ENCODE measurements at regions of chr12 and their contacts with region 1.

Region 1: DNA sequence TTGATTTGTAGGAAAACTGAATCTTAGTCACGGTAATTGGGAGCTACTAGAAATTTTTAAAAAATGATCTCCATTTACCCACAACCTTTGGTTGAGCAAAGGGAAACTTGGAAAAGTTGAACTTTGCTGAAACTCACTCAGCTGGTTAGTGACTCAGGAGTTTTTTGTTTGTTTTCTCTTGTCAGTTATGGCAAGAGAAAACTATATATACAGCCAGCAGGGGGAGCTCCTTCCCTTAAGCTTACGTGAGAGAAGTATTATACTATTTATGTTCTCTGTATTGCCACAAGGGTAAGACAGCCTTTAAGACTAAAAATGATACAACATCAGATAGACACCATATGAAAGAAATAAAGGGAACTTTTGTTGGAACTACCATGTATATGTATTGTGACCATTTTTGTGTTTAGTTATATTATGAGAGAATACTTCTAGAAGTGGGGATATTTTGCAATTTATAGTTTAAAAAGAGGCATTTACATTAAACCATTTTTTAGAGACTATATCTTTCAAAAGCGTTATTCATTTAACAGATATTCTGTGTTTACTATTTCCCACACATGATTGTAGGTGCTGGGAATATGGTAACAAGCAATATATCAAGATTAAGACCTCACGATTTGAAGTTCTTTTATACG is 28.1 kb upstream of the TBC1D30 start:
- DNase-seq: peak; percentile 76 to 85
- H3K4me3 ChIP-seq: no peak overlapping the region
- H3K4me3 Mint-ChIP-seq: no peak overlapping the region
- H3K27ac Mint-ChIP-seq: no peak overlapping the region
- H3K4me1 ChIP-seq: peaks cover 39% of the 10 kb centered on the region
- H3K4me1 Mint-ChIP-seq: peaks cover 45% of the 10 kb centered on the region
- H3K27me3 ChIP-seq: no peaks in the 10 kb centered on the region
- H3K27me3 Mint-ChIP-seq: no peaks in the 10 kb centered on the region
- CTCF ChIP-seq: peak; percentile 62 to 76

Region 2: DNA sequence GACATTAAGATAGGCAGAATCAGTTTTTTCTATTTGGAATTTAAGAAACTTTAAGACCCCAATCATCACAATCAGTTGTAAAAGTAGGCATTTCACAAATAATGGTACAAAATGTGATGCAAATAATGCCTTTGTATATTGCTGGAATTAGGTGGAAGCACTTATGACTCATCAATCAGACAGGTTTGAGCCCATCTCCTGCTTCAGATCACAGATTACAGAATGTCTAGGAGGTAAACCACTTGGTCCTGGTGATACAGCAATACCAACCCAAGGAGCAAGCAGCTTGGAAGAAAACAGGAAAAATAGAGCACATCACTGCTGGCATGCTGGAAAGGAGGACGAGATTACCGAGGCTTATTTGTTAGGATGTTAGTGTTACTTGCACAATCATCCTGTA is 463.4 kb before region 1 on chr12:
- CTCF ChIA-PET with region 1: no interaction called
- POLR2A ChIA-PET with region 1: no interaction called
- intact Hi-C with region 1: no loop called
- DNase-seq: no peak
- H3K4me3 ChIP-seq: no peak overlapping the region
- H3K4me3 Mint-ChIP-seq: no peak overlapping the region
- H3K27ac Mint-ChIP-seq: no peak overlapping the region
- H3K4me1 ChIP-seq: no peaks in the 10 kb centered on the region
- H3K4me1 Mint-ChIP-seq: no peaks in the 10 kb centered on the region
- H3K27me3 ChIP-seq: no peaks in the 10 kb centered on the region
- H3K27me3 Mint-ChIP-seq: no peaks in the 10 kb centered on the region
- CTCF ChIP-seq: no peak

Region 3: DNA sequence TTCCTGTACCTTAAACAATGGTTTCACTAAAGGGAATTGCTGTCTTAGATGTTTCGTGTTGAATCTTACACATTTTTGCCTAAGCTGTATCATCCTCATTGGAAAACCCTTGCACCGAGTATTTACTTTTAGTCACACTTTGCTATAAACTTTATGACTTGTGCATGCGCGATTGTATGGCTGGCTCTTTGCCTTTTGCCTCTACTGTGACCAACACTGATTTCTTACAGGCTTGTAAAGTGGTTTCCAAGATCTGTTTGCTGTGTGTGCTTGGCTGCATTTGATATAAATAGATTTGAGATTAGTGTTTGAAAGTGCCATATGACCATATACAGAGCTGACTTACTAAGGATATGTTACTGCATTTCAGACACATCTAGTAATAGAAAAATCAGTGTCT is 145.6 kb before region 1 on chr12:
- CTCF ChIA-PET with region 1: no interaction called
- POLR2A ChIA-PET with region 1: no interaction called
- intact Hi-C with region 1: no loop called
- DNase-seq: no peak
- H3K4me3 ChIP-seq: no peak overlapping the region
- H3K4me3 Mint-ChIP-seq: no peak overlapping the region
- H3K27ac Mint-ChIP-seq: no peak overlapping the region
- H3K4me1 ChIP-seq: peaks cover 31% of the 10 kb centered on the region
- H3K4me1 Mint-ChIP-seq: peaks cover 11% of the 10 kb centered on the region
- H3K27me3 ChIP-seq: no peaks in the 10 kb centered on the region
- H3K27me3 Mint-ChIP-seq: no peaks in the 10 kb centered on the region
- CTCF ChIP-seq: no peak

Region 4: DNA sequence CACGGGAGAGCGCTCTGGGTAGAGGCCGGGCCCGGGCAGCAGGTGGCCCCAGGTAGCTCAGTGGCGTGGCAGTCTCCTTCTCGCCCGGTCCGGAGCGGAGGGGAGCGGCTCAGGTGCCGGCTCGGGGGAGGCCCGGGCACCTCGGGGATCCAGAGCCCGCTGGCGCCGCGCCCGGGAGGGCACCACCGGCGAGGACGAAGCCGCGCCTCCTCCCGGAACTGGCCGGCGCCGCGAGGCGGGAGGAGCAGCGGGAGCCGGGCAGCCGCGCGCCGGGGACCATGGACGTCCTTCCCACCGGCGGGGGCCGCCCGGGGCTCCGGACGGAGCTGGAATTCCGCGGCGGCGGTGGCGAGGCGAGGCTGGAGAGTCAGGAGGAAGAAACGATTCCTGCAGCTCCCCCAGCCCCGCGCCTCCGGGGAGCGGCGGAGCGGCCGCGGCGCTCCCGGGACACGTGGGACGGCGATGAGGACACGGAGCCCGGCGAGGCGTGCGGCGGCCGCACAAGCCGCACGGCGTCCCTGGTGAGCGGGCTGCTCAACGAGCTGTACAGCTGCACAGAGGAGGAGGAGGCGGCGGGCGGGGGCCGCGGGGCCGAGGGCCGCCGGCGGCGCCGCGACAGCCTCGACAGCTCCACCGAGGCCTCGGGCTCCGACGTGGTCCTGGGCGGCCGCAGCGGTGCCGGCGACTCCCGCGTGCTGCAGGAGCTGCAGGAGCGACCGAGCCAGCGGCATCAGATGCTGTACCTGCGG is 15.6 kb before region 1 on chr12:
- CTCF ChIA-PET with region 1: interaction called, 19 read pairs
- POLR2A ChIA-PET with region 1: interaction called, 8 read pairs
- intact Hi-C with region 1: no loop called
- DNase-seq: peak; percentile 64 to 75
- H3K4me3 ChIP-seq: peak overlapping the region; percentile 49
- H3K4me3 Mint-ChIP-seq: peak overlapping the region; percentile 90
- H3K27ac Mint-ChIP-seq: peak overlapping the region; percentile 80
- H3K4me1 ChIP-seq: peaks cover 19% of the 10 kb centered on the region
- H3K4me1 Mint-ChIP-seq: peaks cover 7% of the 10 kb centered on the region
- H3K27me3 ChIP-seq: no peaks in the 10 kb centered on the region
- H3K27me3 Mint-ChIP-seq: no peaks in the 10 kb centered on the region
- CTCF ChIP-seq: peak in 1 of 2 experiments; percentile 24

Region 5: GRCh38 chr12:64836862-64837261 is 40.5 kb after region 1 on chr12:
- CTCF ChIA-PET with region 1: no interaction called
- POLR2A ChIA-PET with region 1: interaction called, 10 read pairs
- intact Hi-C with region 1: loop called (anchors 5 kb)
- DNase-seq: no peak
- H3K4me3 ChIP-seq: no peak overlapping the region
- H3K4me3 Mint-ChIP-seq: no peak overlapping the region
- H3K27ac Mint-ChIP-seq: no peak overlapping the region
- H3K4me1 ChIP-seq: peaks cover 6% of the 10 kb centered on the region; the same call in 1 of the 2 replicates
- H3K4me1 Mint-ChIP-seq: peaks cover 6% of the 10 kb centered on the region
- H3K27me3 ChIP-seq: no peaks in the 10 kb centered on the region
- H3K27me3 Mint-ChIP-seq: no peaks in the 10 kb centered on the region
- CTCF ChIP-seq: no peak

Region 6: DNA sequence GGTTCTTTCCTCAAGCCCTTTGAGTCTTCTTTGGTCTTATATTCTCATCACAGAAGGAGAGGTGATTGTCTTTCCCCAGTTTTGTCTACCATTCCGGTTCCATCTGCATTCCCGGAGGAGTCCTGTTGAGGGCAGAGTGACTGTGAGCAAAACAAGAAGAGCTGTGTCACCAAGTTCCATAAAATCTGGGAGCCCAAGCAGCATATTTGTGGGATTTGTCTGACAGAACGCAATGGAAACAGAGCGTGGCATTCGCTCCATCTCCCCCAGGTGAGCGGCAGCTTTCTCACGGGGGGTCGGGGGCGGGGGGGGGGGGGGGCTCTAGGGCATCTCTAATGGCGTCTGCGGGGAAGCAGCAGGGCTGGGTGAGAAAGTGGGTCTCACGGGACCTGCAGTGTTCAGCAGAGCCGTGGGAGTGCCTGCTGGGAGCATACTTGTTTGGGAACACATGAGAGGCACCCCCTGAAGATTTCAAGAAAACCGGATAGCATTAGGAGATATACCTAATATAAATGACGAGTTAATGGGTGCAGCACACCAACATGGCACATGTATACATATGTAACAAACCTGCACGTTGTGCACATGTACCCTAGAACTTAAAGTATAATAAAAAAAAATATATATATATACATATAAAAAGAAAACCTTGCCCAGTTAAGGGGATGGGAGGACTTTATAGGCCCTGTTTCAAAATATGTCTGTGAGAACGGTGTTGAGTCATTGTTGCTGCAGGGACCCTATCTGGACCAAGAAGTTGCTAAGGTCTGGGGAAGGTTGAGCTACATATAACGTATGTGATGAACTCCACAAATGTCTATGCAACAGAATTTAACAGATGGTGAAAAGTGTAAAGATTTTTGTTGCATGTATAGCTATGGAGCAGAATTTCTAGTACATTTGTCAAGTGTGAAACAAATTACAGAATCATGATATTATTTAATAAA is 87.5 kb after region 1 on chr12:
- CTCF ChIA-PET with region 1: interaction called, 18 read pairs
- POLR2A ChIA-PET with region 1: no interaction called
- intact Hi-C with region 1: no loop called
- DNase-seq: peak; percentile 34 to 42
- H3K4me3 ChIP-seq: no peak overlapping the region
- H3K4me3 Mint-ChIP-seq: no peak overlapping the region
- H3K27ac Mint-ChIP-seq: peak overlapping the region; percentile 37
- H3K4me1 ChIP-seq: peaks cover 27% of the 10 kb centered on the region
- H3K4me1 Mint-ChIP-seq: peaks cover 22% of the 10 kb centered on the region
- H3K27me3 ChIP-seq: no peaks in the 10 kb centered on the region
- H3K27me3 Mint-ChIP-seq: no peaks in the 10 kb centered on the region
- CTCF ChIP-seq: no peak

Region 7: GRCh38 chr12:64998371-64999147 is 202.2 kb after region 1 on chr12:
- CTCF ChIA-PET with region 1: no interaction called
- POLR2A ChIA-PET with region 1: no interaction called
- intact Hi-C with region 1: no loop called
- DNase-seq: no peak
- H3K4me3 ChIP-seq: no peak overlapping the region
- H3K4me3 Mint-ChIP-seq: no peak overlapping the region
- H3K27ac Mint-ChIP-seq: peak overlapping the region; percentile 42
- H3K4me1 ChIP-seq: peaks cover 43% of the 10 kb centered on the region
- H3K4me1 Mint-ChIP-seq: peaks cover 31% of the 10 kb centered on the region
- H3K27me3 ChIP-seq: no peaks in the 10 kb centered on the region
- H3K27me3 Mint-ChIP-seq: no peaks in the 10 kb centered on the region
- CTCF ChIP-seq: no peak

Region 8: DNA sequence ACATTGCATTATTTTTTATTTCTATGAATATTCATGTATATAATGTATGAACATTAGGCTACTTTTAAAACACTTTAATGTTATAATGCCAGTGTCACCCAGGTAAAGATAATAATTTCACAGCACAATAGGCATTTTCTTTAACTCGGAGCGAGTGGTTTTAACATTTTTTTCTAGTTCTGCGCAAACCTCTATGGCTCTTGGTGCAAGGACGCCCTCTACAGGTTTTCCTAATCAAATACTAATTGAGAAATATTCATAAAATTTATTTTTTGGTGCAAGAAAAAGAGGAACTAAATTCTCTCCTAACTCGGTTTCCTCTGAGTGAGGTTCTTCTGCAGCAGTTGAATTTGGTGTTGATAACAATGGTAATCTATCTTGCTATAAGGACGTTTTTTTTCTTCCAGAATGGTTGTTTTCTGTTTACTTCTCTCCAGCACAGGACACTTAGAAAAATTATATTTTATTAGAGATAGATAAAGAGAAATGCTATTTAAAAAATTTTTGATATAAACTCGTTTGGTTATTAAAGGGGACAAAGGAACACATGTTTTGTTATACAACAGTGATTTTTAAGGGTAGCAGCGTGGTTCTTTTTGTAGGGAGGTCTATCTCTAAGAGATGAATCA is 327.2 kb after region 1 on chr12:
- CTCF ChIA-PET with region 1: no interaction called
- POLR2A ChIA-PET with region 1: no interaction called
- intact Hi-C with region 1: loop called (anchors 2 kb)
- DNase-seq: peak in 1 of 2 experiments; percentile 53
- H3K4me3 ChIP-seq: no peak overlapping the region
- H3K4me3 Mint-ChIP-seq: no peak overlapping the region
- H3K27ac Mint-ChIP-seq: no peak overlapping the region
- H3K4me1 ChIP-seq: no peaks in the 10 kb centered on the region
- H3K4me1 Mint-ChIP-seq: no peaks in the 10 kb centered on the region
- H3K27me3 ChIP-seq: no peaks in the 10 kb centered on the region
- H3K27me3 Mint-ChIP-seq: no peaks in the 10 kb centered on the region
- CTCF ChIP-seq: peak; percentile 62 to 68

Measured in Caco-2 (cell line).